A549 (cell line): ENCODE measurements at regions of chr6 and their contacts with region 1.

Region 1: GRCh38 chr6:31575335-31575901 is at the start of gene TNF:
- DNase-seq: no peak
- ATAC-seq: no peak
- H3K4me3 ChIP-seq: no peak within 1 kb of the TSS
- H3K27ac ChIP-seq: no peak within 1 kb of the TSS
- H3K4me1 ChIP-seq: no peaks in the 10 kb centered on the region
- CTCF ChIP-seq: no peak
- EP300 ChIP-seq: no peak
- POLR2A ChIP-seq: no peak
- RAD21 ChIP-seq: no peak
- polyA plus RNA-seq, gene TNF: 0.07 TPM in 1 of 2 replicates, not detected in the other

Region 2: DNA sequence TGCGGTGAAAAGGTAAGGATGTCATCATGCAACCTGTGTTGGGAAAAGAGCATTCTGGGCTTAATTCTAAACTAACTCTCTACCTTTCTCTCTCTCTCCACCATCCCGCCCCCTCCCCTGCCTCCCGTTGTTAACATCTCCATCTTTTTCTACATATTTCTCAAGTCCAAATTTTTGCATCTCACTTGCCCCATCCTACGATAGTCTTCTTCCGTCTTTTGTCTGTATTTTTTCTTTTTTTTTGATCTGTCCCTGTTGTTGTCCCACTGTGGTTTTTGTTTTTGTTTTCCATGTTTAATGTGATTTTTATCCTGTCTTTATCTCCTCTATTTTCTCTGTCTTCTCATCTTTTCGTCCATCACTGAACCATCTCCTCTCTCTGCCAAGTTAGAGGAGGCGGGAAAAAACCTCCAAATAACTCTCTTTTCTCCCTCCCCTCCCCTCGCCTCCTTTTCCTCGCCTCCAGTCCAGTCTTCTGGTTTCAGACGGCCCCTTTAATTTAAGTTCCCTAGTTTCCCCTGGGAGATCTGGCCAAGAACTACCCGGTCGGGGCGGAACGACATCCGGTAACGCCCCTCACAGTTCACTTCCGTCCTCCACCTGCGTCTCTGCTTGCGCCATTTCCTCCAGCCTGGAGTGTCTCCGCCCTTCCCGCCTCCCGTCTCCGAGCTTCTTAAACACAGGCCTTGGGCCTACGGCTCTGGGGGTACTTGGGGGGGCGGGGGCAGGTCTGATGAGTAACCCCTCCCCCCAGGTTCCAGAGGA is 28.3 kb before region 1 on chr6 and contains the start of gene NFKBIL1:
- CTCF ChIA-PET with region 1: interaction called, 56 read pairs
- POLR2A ChIA-PET with region 1: interaction called, 3 read pairs
- DNase-seq: peak; percentile 85 to 97
- ATAC-seq: peak; percentile 93 to 95
- H3K4me3 ChIP-seq: peak within 1 kb of the TSS; percentile 57
- H3K27ac ChIP-seq: peak within 1 kb of the TSS; percentile 87 to 90
- H3K4me1 ChIP-seq: peaks cover 14% of the 10 kb centered on the region
- CTCF ChIP-seq: no peak
- EP300 ChIP-seq: no peak
- POLR2A ChIP-seq: no peak
- RAD21 ChIP-seq: no peak
- polyA plus RNA-seq, gene NFKBIL1: 3.8 and 5.2 TPM in 2 replicates

Region 3: GRCh38 chr6:31559958-31560696 is 15.3 kb before region 1 on chr6:
- CTCF ChIA-PET with region 1: interaction called, 10 read pairs
- POLR2A ChIA-PET with region 1: no interaction called
- DNase-seq: peak in 1 of 2 experiments; percentile 12
- ATAC-seq: peak; percentile 64 to 80; a peak in 3 of 6 replicates
- H3K4me3 ChIP-seq: no peak overlapping the region
- H3K27ac ChIP-seq: peak overlapping the region; percentile 33 to 74; a peak in 4 of 6 replicates
- H3K4me1 ChIP-seq: peaks cover 27% of the 10 kb centered on the region
- CTCF ChIP-seq: no peak
- EP300 ChIP-seq: no peak
- POLR2A ChIP-seq: no peak
- RAD21 ChIP-seq: no peak